Activated CD4-positive, alpha-beta memory T cell treated with anti-CD3 and anti-CD28 coated beads for 36 hours (primary cell): ENCODE measurements at regions of chr17 and their contacts with region 1.

Region 1: GRCh38 chr17:29760761-29761696 is 138.3 kb upstream of the CORO6 start:
- DNase-seq: peak; percentile 96
- H3K4me3 Mint-ChIP-seq: peak overlapping the region; percentile 98
- H3K27ac Mint-ChIP-seq: peak overlapping the region; percentile 99
- H3K4me1 Mint-ChIP-seq: peaks cover 28% of the 10 kb centered on the region
- H3K27me3 Mint-ChIP-seq: no peaks in the 10 kb centered on the region

Region 2: GRCh38 chr17:29640413-29640812 is 120.6 kb before region 1 on chr17:
- CTCF ChIA-PET with region 1: interaction called, 16 read pairs
- POLR2A ChIA-PET with region 1: interaction called, 4 read pairs
- intact Hi-C with region 1: loop called (anchors 5 kb)
- DNase-seq: no peak
- H3K4me3 Mint-ChIP-seq: no peak overlapping the region
- H3K27ac Mint-ChIP-seq: peak overlapping the region; percentile 3
- H3K4me1 Mint-ChIP-seq: peaks cover 27% of the 10 kb centered on the region
- H3K27me3 Mint-ChIP-seq: no peaks in the 10 kb centered on the region

Region 3: DNA sequence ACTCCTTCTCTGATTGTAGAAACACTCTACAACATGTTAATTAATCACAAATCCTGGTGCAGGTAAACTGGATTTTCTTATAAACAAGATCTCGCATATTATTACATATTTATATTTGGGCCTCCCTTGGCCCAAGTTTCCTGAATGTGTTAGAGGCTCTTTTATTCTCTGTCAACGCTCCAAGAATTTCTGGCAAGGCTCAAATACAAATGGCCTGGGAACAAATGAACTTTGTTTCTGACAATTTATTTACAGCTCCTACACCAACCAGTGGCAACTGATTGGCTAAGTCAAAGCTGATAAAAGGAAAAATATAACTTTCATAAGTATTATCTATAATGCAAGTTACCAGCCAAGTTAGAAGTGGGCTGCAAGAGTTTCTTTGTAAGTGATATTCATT is 73.4 kb before region 1 on chr17:
- CTCF ChIA-PET with region 1: no interaction called
- POLR2A ChIA-PET with region 1: interaction called, 4 read pairs
- intact Hi-C with region 1: loop called (anchors 1 kb)
- DNase-seq: no peak
- H3K4me3 Mint-ChIP-seq: no peak overlapping the region
- H3K27ac Mint-ChIP-seq: no peak overlapping the region
- H3K4me1 Mint-ChIP-seq: peaks cover 17% of the 10 kb centered on the region
- H3K27me3 Mint-ChIP-seq: no peaks in the 10 kb centered on the region

Region 4: GRCh38 chr17:29722411-29723198 is 38.4 kb before region 1 on chr17:
- CTCF ChIA-PET with region 1: no interaction called
- POLR2A ChIA-PET with region 1: interaction called, 5 read pairs
- intact Hi-C with region 1: loop called (anchors 2 kb)
- DNase-seq: peak; percentile 35
- H3K4me3 Mint-ChIP-seq: peak overlapping the region; percentile 28
- H3K27ac Mint-ChIP-seq: peak overlapping the region; percentile 56
- H3K4me1 Mint-ChIP-seq: peaks cover 69% of the 10 kb centered on the region
- H3K27me3 Mint-ChIP-seq: no peaks in the 10 kb centered on the region

Region 5: GRCh38 chr17:30148376-30148775 is 387.3 kb after region 1 on chr17:
- CTCF ChIA-PET with region 1: no interaction called
- POLR2A ChIA-PET with region 1: no interaction called
- intact Hi-C with region 1: no loop called
- DNase-seq: no peak
- H3K4me3 Mint-ChIP-seq: no peak overlapping the region
- H3K27ac Mint-ChIP-seq: no peak overlapping the region
- H3K4me1 Mint-ChIP-seq: peaks cover 10% of the 10 kb centered on the region
- H3K27me3 Mint-ChIP-seq: no peaks in the 10 kb centered on the region